Tibial artery (tissue), 4 donors: ENCODE measurements at regions of chr3 and their contacts with region 1.

Region 1: GRCh38 chr3:46936733-46937250 is 39.8 kb downstream of the CCDC12 start:
- DNase-seq: peak; percentile 17 to 66
- H3K4me3 ChIP-seq: no peak overlapping the region
- H3K27ac ChIP-seq: peak overlapping the region; percentile 80 to 85
- H3K4me1 ChIP-seq: peaks cover 6 to 56% (median 52%) of the 10 kb centered on the region in 4 donors
- H3K27me3 ChIP-seq: no peaks in the 10 kb centered on the region
- CTCF ChIP-seq: no peak

Region 2: GRCh38 chr3:46976326-46977190 is 39.8 kb after region 1 on chr3 and contains the start of gene CCDC12:
- intact Hi-C with region 1: loop called (anchors 2 kb)
- DNase-seq: peak; percentile 99
- H3K4me3 ChIP-seq: peak within 1 kb of the TSS; percentile 66 to 71
- H3K27ac ChIP-seq: peak within 1 kb of the TSS; percentile 91 to 95
- H3K4me1 ChIP-seq: peaks cover 0 to 71% (median 47%) of the 10 kb centered on the region in 4 donors
- H3K27me3 ChIP-seq: no peaks in the 10 kb centered on the region
- CTCF ChIP-seq: no peak